ENCODE measurements at regions of chr22 and their contacts with region 1.

Region 1: GRCh38 chr22:37544955-37545699 is 15.2 kb upstream of the CDC42EP1 start:
- DNase-seq: no peak
- H3K4me3 ChIP-seq: peak overlapping the region; percentile 33
- H3K27me3 ChIP-seq: no peaks in the 10 kb centered on the region
- CTCF ChIP-seq: peak; percentile 83

Region 2: GRCh38 chr22:37390075-37390474 is 155.1 kb before region 1 on chr22:
- CTCF ChIA-PET with region 1: no interaction called
- POLR2A ChIA-PET with region 1: no interaction called
- DNase-seq: no peak
- H3K4me3 ChIP-seq: no peak overlapping the region
- H3K27me3 ChIP-seq: peaks cover under 1% of the 10 kb centered on the region; the same call in 1 of the 2 replicates
- CTCF ChIP-seq: no peak

Region 3: GRCh38 chr22:37492428-37493344 is 52.4 kb before region 1 on chr22:
- CTCF ChIA-PET with region 1: no interaction called
- POLR2A ChIA-PET with region 1: interaction called, 11 read pairs
- DNase-seq: no peak
- H3K4me3 ChIP-seq: no peak overlapping the region
- H3K27me3 ChIP-seq: no peaks in the 10 kb centered on the region
- CTCF ChIP-seq: peak; percentile 65

Region 4: DNA sequence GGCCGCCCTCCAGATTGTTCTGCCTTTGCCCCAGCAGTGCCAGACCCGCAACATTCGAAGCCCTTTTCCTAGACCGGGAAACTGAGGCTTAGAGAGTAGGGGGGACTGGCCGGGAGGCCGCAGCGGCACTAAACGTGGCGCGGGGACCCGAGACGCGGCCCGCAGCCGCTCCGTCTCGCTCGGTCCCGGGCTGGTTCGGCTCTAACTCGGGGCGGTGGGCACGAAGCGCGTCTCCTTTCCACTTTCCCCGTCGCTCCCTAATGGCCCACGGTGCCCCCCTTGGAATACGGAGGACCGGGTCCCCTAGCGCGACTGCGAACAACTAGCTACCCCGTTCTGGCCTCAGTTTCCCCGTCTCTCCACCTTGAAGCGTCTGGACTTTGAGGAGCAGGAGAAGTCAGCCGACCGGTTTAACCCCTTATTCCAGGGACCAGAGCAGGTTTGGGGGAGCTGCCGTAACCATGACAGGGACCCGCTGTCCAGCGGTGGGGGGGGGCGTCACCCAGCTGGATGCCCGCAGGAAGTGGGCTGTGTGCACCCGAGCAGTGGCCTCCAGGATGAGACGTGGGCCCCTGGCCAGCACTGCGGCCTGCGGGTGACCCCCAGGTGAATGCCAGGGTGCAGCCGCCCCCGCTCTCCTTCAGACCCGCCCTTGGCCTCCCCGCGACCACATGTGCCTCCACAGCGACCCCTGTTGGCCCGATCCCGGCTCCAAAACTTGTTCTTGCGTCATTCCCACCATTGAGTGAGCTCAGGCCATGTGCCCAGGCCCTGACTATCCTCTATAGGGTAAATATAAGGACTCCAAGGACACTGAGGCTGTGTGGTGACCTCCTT is 16.3 kb after region 1 on chr22:
- CTCF ChIA-PET with region 1: interaction called, 551 read pairs
- POLR2A ChIA-PET with region 1: interaction called, 16 read pairs
- DNase-seq: no peak
- H3K4me3 ChIP-seq: peak overlapping the region; percentile 83
- H3K27me3 ChIP-seq: no peaks in the 10 kb centered on the region
- CTCF ChIP-seq: peak; percentile 92

Measured in BJ (cell line).